ENCODE measurements at regions of chr14 and their contacts with region 1.

Region 1: DNA sequence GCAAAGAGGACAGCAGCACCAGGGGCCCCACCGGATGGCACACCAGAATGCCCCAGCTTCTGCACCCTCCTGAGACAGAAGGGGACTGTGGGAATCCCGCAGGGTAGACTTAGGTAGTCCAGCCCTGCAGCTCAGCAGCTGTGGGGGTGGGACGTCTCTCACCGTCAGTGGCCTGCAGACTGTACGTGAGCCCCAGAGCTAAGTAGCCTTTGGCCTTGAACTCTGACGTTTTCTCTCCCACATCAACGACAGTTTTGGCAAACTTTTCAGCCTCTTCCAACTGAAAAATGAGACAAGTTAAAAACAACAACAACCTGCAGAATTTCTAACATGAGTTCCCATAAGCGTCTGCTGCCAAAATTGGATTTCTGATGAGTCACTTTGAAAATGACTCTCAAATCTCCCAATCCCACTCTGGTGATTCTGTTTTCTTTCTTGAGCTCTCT is 161.4 kb downstream of the TTC7B start:
- DNase-seq: no peak

Region 2: GRCh38 chr14:90611936-90612335 is 42.9 kb before region 1 on chr14:
- intact Hi-C with region 1: no loop called
- DNase-seq: no peak

Region 3: GRCh38 chr14:90642244-90642717 is 12.6 kb before region 1 on chr14:
- intact Hi-C with region 1: loop called in 1 of 2 experiments (anchors 2 kb)
- DNase-seq: no peak

Region 4: GRCh38 chr14:90687680-90688079 is 32.8 kb after region 1 on chr14:
- intact Hi-C with region 1: loop called in 1 of 2 experiments (anchors 5 kb)
- DNase-seq: no peak

Region 5: GRCh38 chr14:92397150-92397952 is 1742.5 kb after region 1 on chr14:
- intact Hi-C with region 1: loop called in 1 of 2 experiments (anchors 5 kb)
- DNase-seq: no peak

Measured in posterior vena cava (tissue), 2 donors.